ENCODE measurements at regions of chr15 and their contacts with region 1.

Region 1: DNA sequence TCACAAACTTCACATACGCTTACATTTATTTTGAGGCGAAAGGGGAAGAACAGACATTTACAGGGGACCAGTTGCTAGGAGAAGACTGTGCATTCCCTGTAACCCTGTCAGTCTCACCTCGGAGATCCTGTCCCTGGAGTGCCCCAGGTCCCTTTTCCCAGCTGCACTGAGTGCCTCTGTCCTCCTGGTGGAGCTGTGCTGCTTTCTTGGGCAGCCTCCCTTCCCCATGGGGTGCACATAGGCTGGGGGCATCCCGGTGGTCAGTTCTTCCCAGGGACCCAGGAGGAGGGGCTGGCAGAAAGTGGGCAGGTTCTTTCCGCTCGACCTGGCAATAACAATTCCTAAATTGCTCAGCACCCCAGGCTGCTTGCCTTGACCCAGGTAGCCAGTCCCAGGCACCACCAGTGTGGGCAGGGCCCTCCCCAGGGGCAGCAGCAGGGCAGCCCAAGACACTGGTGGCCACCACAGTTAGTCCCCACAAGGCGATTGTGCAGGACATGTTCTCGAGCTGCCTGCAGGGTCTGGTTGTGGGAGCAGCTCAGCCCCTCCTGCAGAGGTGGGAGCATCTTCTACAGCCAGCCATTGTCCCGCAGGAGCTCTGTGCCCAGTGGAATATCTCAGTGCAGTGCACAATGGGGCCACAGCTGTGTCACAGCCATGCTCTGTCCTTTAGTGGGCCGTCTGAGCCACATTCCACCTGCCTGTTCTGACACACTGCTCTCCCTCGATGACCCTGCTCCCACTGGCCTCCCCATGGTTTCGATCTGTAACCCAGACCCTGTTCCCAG is 36.3 kb downstream of the APBA2 start:
- DNase-seq: no peak
- ATAC-seq: no peak
- H3K4me3 ChIP-seq: no peak overlapping the region
- H3K4me3 Mint-ChIP-seq: peak overlapping the region; percentile 83
- H3K27ac ChIP-seq: no peak overlapping the region
- H3K27ac Mint-ChIP-seq: peak overlapping the region; percentile 84
- H3K4me1 ChIP-seq: peaks cover 64% of the 10 kb centered on the region
- H3K4me1 Mint-ChIP-seq: peaks cover 82% of the 10 kb centered on the region
- H3K27me3 ChIP-seq: no peaks in the 10 kb centered on the region
- H3K27me3 Mint-ChIP-seq: no peaks in the 10 kb centered on the region
- CTCF ChIP-seq: no peak

Region 2: DNA sequence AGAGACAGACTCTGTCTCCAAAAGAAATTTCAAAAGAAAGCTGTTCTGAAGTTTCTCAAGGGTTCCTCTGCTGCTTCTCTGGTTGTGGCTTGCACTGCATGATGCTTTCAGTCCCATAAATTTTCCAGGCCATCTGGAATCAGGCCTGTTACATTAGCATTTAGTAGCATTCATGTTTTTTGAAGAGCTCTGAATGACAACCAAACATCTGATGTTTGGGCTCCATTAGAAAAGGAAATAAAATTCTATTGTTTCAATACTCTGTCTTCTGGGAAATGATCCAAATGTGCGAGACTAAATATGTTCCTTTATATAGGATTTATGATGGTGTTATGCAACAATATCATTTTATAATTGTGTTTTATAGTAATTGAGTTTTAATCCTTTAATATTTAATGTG is 1495.3 kb before region 1 on chr15:
- CTCF ChIA-PET with region 1: no interaction called
- POLR2A ChIA-PET with region 1: no interaction called
- intact Hi-C with region 1: no loop called
- DNase-seq: no peak
- ATAC-seq: no peak
- H3K4me3 ChIP-seq: no peak overlapping the region
- H3K4me3 Mint-ChIP-seq: no peak overlapping the region
- H3K27ac ChIP-seq: no peak overlapping the region
- H3K27ac Mint-ChIP-seq: no peak overlapping the region
- H3K4me1 ChIP-seq: no peaks in the 10 kb centered on the region
- H3K4me1 Mint-ChIP-seq: no peaks in the 10 kb centered on the region
- H3K27me3 ChIP-seq: no peaks in the 10 kb centered on the region
- H3K27me3 Mint-ChIP-seq: no peaks in the 10 kb centered on the region
- CTCF ChIP-seq: no peak

Region 3: GRCh38 chr15:28885630-28886430 is 36.3 kb before region 1 on chr15 and contains the start of gene APBA2:
- CTCF ChIA-PET with region 1: no interaction called
- POLR2A ChIA-PET with region 1: interaction called, 12 read pairs
- intact Hi-C with region 1: loop called in 1 of 2 experiments (anchors 2 kb)
- DNase-seq: peak; percentile 27 to 77 (median 48)
- ATAC-seq: peak; percentile 59
- H3K4me3 ChIP-seq: peak within 1 kb of the TSS; percentile 73
- H3K4me3 Mint-ChIP-seq: peak within 1 kb of the TSS; percentile 90
- H3K27ac ChIP-seq: peak within 1 kb of the TSS; percentile 30 to 44
- H3K27ac Mint-ChIP-seq: peak within 1 kb of the TSS; percentile 99
- H3K4me1 ChIP-seq: peaks cover 57% of the 10 kb centered on the region
- H3K4me1 Mint-ChIP-seq: peaks cover 39% of the 10 kb centered on the region
- H3K27me3 ChIP-seq: peaks cover 0 to 2% of the 10 kb centered on the region in 2 experiments
- H3K27me3 Mint-ChIP-seq: no peaks in the 10 kb centered on the region
- CTCF ChIP-seq: peak; percentile 34
- total RNA-seq, gene APBA2: 123 to 126 TPM

Measured in CD4-positive, alpha-beta T cell (primary cell).